ENCODE measurements at regions of chr2 and their contacts with region 1.

Region 1: DNA sequence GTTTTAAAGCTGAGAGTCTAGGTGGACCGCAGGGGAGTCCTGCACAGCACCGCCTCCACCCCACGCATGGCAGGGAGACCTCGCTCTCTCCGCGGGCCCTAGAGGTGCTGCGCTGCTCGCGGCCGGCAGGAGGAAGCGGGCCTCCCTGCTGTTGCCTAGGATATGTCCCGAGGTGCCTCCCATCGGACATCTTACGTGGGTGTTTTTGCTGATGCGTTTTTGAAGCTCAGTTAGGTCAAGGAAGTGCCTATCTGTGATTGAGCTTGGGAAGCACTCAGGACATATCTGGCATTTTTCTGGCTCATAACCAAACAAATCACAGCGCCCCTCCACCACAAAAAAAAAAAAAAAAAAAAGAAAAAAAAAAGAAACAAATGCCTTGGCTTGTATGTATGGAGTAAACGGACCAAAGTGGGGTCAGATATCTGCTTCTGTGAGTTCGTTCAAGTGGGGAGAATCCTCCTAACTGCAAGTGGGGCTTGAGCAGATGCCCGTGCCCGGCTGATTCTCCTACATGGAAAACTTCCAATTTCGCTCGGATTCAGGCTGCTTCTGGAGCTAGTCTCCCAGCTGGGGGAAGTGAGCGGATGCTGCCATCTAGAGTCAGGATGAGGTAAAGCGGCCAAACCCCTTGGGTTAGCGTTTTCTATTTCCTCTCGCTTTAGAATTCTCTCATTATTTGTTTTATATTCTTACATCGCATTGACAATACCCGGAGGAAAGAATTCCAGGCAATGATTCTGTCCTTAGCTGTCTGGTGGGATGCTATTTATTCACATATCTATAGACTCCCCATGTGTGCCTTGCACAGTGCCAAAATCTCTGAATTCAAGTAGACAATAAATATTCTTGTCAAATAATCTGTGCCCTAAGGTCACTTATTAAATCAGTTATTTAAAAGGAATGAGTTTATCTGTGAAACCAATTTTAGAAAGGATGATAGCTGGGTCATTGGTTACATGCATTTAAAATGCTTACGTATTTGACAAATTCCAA is 95.3 kb downstream of the CD8B2 start:
- DNase-seq: no peak
- ATAC-seq: peak; percentile 89
- H3K4me3 ChIP-seq: no peak overlapping the region; the same call in 1 of the 2 replicates
- H3K27ac ChIP-seq: no peak overlapping the region
- H3K4me1 ChIP-seq: no peaks in the 10 kb centered on the region
- H3K27me3 ChIP-seq: no peaks in the 10 kb centered on the region; a peak in 1 of 4 replicates
- CTCF ChIP-seq: peak; percentile 83 to 88 (median 85)
- EP300 ChIP-seq: no peak
- POLR2A ChIP-seq: no peak
- RAD21 ChIP-seq: peak; percentile 69

Region 2: GRCh38 chr2:105576440-105577252 is 1005.8 kb before region 1 on chr2:
- CTCF ChIA-PET with region 1: no interaction called
- POLR2A ChIA-PET with region 1: no interaction called
- RAD21 ChIA-PET with region 1: no interaction called
- SMC1A ChIA-PET with region 1: no interaction called
- in situ Hi-C with region 1: no loop called
- intact Hi-C with region 1: loop called (anchors 5 kb)
- DNase-seq: no peak
- ATAC-seq: peak; percentile 65
- H3K4me3 ChIP-seq: no peak overlapping the region
- H3K27ac ChIP-seq: no peak overlapping the region
- H3K4me1 ChIP-seq: no peaks in the 10 kb centered on the region
- H3K27me3 ChIP-seq: no peaks in the 10 kb centered on the region; a peak in 1 of 4 replicates
- CTCF ChIP-seq: peak; percentile 48 to 56 (median 49); a peak in 5 of 6 replicates
- EP300 ChIP-seq: no peak
- POLR2A ChIP-seq: no peak
- RAD21 ChIP-seq: peak; percentile 77

Region 3: GRCh38 chr2:106562268-106563186 is 19.9 kb before region 1 on chr2:
- CTCF ChIA-PET with region 1: interaction called, 13 read pairs
- POLR2A ChIA-PET with region 1: no interaction called
- RAD21 ChIA-PET with region 1: no interaction called
- SMC1A ChIA-PET with region 1: interaction called, 3 read pairs
- in situ Hi-C with region 1: no loop called
- intact Hi-C with region 1: no loop called
- DNase-seq: no peak
- ATAC-seq: no peak
- H3K4me3 ChIP-seq: no peak overlapping the region
- H3K27ac ChIP-seq: no peak overlapping the region
- H3K4me1 ChIP-seq: no peaks in the 10 kb centered on the region
- H3K27me3 ChIP-seq: no peaks in the 10 kb centered on the region; a peak in 2 of 4 replicates
- CTCF ChIP-seq: no peak
- EP300 ChIP-seq: no peak
- POLR2A ChIP-seq: no peak
- RAD21 ChIP-seq: no peak